Endothelial cell of umbilical vein (primary cell): ENCODE measurements at regions of chr2 and their contacts with region 1.

Region 1: GRCh38 chr2:181715033-181715630 is 34.8 kb upstream of the NEUROD1 start:
- DNase-seq: peak; percentile 81
- H3K4me3 ChIP-seq: no peak overlapping the region
- H3K27ac ChIP-seq: no peak overlapping the region
- H3K4me1 ChIP-seq: no peaks in the 10 kb centered on the region
- H3K27me3 ChIP-seq: peaks cover 2 to 12% of the 10 kb centered on the region in 2 experiments
- CTCF ChIP-seq: peak; percentile 48 to 54
- POLR2A ChIP-seq: no peak

Region 2: GRCh38 chr2:180980106-180980942 is 734.8 kb before region 1 on chr2 and contains the start of gene UBE2E3:
- CTCF ChIA-PET with region 1: interaction called, 21 read pairs
- POLR2A ChIA-PET with region 1: no interaction called
- dilution Hi-C with region 1: no loop called
- intact Hi-C with region 1: no loop called
- DNase-seq: peak; percentile 80
- H3K4me3 ChIP-seq: peak within 1 kb of the TSS; percentile 82 to 98 (median 96)
- H3K27ac ChIP-seq: peak within 1 kb of the TSS; percentile 82
- H3K4me1 ChIP-seq: peaks cover 39% of the 10 kb centered on the region
- H3K27me3 ChIP-seq: no peaks in the 10 kb centered on the region
- CTCF ChIP-seq: peak; percentile 52 to 80
- POLR2A ChIP-seq: peak; percentile 77
- total RNA-seq, gene UBE2E3: 81.5 and 89.2 TPM in 2 replicates

Region 3: DNA sequence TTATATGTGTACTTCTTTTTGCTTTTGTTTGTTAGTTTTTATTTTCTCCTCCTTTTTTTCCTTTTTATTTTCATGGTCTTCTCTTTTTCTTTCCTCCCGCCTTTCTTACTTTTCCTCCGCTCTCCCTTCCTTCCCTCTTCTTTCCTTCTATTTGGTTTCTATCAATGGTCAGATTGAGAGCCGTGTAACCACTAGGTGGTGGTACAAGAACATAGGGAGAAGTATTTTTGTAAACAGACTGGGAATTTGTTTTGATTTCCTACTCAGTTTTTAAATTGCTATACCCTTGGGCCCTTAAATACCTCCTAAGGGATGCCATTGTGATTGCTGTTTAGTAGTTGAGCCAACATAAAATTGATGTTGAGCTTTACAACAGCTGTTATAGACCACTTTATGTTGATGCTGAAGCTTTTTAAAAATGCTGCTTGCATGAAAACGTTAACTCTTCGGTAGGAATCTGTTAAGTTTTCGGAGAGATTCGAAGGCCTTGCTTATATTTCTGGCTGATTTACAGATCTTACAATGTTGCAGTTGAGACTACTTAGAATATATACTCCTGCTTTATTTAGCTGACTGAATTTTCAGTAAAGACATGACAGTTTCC is 610.5 kb before region 1 on chr2:
- CTCF ChIA-PET with region 1: interaction called, 40 read pairs
- POLR2A ChIA-PET with region 1: no interaction called
- dilution Hi-C with region 1: no loop called
- intact Hi-C with region 1: loop called (anchors 1 kb)
- DNase-seq: peak; percentile 57
- H3K4me3 ChIP-seq: no peak overlapping the region
- H3K27ac ChIP-seq: no peak overlapping the region
- H3K4me1 ChIP-seq: peaks cover 12% of the 10 kb centered on the region
- H3K27me3 ChIP-seq: no peaks in the 10 kb centered on the region
- CTCF ChIP-seq: peak; percentile 35 to 41
- POLR2A ChIP-seq: no peak

Region 4: DNA sequence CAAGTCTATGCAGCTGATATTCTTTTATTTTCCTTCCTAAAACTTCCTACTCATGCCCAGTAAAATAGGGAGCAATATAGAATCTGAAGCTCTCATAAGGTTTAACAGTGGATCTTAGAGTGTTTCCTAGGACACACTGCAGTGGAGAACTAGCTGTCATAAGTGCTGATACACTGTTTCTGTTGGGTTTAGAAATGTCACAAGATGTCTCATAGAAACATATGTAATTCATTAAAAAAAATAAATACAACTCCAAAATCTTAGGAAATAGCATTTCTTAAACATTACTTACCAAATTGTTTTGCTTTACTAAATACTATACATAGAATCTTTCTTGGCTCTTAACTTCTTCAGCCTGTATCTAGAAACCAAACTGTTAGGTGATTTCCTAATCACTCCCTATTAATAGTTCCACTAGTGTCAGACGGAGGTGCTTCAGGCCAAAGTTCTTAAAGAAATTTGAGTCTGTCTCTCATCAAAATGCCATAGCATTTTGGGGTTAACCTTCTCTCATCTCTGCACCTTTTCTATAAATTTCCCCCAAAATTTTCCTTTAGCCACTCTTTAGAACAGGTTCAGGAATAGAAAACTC is 151.9 kb before region 1 on chr2:
- CTCF ChIA-PET with region 1: interaction called, 10 read pairs
- POLR2A ChIA-PET with region 1: no interaction called
- dilution Hi-C with region 1: no loop called
- intact Hi-C with region 1: no loop called
- DNase-seq: no peak
- H3K4me3 ChIP-seq: no peak overlapping the region
- H3K27ac ChIP-seq: no peak overlapping the region
- H3K4me1 ChIP-seq: no peaks in the 10 kb centered on the region
- H3K27me3 ChIP-seq: no peaks in the 10 kb centered on the region
- CTCF ChIP-seq: no peak
- POLR2A ChIP-seq: no peak

Region 5: GRCh38 chr2:181698223-181698622 is 16.9 kb before region 1 on chr2:
- CTCF ChIA-PET with region 1: interaction called, 27 read pairs
- POLR2A ChIA-PET with region 1: no interaction called
- dilution Hi-C with region 1: no loop called
- intact Hi-C with region 1: no loop called
- DNase-seq: no peak
- H3K4me3 ChIP-seq: no peak overlapping the region
- H3K27ac ChIP-seq: no peak overlapping the region
- H3K4me1 ChIP-seq: no peaks in the 10 kb centered on the region
- H3K27me3 ChIP-seq: peaks cover 0 to 2% of the 10 kb centered on the region in 2 experiments
- CTCF ChIP-seq: no peak
- POLR2A ChIP-seq: no peak

Region 6: GRCh38 chr2:182077451-182078142 is 362.5 kb after region 1 on chr2:
- CTCF ChIA-PET with region 1: interaction called, 32 read pairs
- POLR2A ChIA-PET with region 1: no interaction called
- dilution Hi-C with region 1: no loop called
- intact Hi-C with region 1: no loop called
- DNase-seq: peak; percentile 84
- H3K4me3 ChIP-seq: no peak overlapping the region
- H3K27ac ChIP-seq: no peak overlapping the region
- H3K4me1 ChIP-seq: peaks cover 3% of the 10 kb centered on the region
- H3K27me3 ChIP-seq: no peaks in the 10 kb centered on the region
- CTCF ChIP-seq: peak; percentile 40 to 45
- POLR2A ChIP-seq: no peak